ENCODE measurements at regions of chr11 and their contacts with region 1.

Region 1: GRCh38 chr11:7098235-7098832 is 9.5 kb downstream of the RBMXL2 start:
- DNase-seq: peak; percentile 46
- ATAC-seq: peak; percentile 83
- H3K4me3 ChIP-seq: no peak overlapping the region
- H3K27ac ChIP-seq: no peak overlapping the region
- H3K4me1 ChIP-seq: no peaks in the 10 kb centered on the region
- H3K27me3 ChIP-seq: no peaks in the 10 kb centered on the region; the same call in 1 of the 2 replicates
- CTCF ChIP-seq: peak; percentile 77
- POLR2A ChIP-seq: no peak
- RAD21 ChIP-seq: peak; percentile 85

Region 2: DNA sequence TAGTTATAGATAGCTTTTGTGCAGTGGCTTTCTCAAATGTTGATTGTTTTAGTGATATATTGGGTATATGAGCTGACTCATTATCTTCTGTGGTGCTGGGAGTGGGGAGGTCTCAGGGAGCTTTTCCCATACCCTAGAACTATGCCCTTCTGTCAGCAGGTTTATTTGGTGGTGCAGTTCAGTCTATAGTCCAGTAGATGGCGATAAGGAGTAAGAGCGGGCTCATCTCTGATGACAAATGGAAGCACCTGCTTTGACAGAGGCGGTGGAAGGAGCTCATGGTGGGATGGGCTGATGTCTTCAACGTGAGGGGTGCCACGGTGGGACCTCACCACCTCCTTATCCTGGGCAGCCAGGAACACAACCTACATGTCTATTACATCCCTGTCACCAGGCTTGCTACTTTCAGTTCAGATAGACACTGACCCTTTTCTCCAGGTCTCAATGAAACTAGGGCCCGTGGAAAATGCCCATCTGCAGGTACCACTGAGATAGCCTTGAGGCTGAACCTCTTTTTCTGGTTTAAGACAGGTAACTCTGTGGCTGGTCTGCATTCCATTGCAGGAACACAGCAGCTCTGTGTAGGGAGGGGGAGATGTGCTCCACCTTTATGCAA is 285.8 kb before region 1 on chr11:
- CTCF ChIA-PET with region 1: interaction called, 6 read pairs
- POLR2A ChIA-PET with region 1: no interaction called
- dilution Hi-C with region 1: no loop called
- in situ Hi-C with region 1: no loop called
- intact Hi-C with region 1: loop called (anchors 10 kb)
- DNase-seq: peak; percentile 34
- ATAC-seq: peak; percentile 96
- H3K4me3 ChIP-seq: no peak overlapping the region
- H3K27ac ChIP-seq: no peak overlapping the region
- H3K4me1 ChIP-seq: no peaks in the 10 kb centered on the region
- H3K27me3 ChIP-seq: no peaks in the 10 kb centered on the region; the same call in 1 of the 2 replicates
- CTCF ChIP-seq: peak; percentile 71
- POLR2A ChIP-seq: no peak
- RAD21 ChIP-seq: peak; percentile 71

Region 3: GRCh38 chr11:7278314-7278917 is 180.1 kb after region 1 on chr11:
- CTCF ChIA-PET with region 1: no interaction called
- POLR2A ChIA-PET with region 1: no interaction called
- dilution Hi-C with region 1: no loop called
- in situ Hi-C with region 1: no loop called
- intact Hi-C with region 1: loop called (anchors 2 kb)
- DNase-seq: peak; percentile 34
- ATAC-seq: peak; percentile 76
- H3K4me3 ChIP-seq: no peak overlapping the region
- H3K27ac ChIP-seq: no peak overlapping the region
- H3K4me1 ChIP-seq: no peaks in the 10 kb centered on the region
- H3K27me3 ChIP-seq: no peaks in the 10 kb centered on the region
- CTCF ChIP-seq: peak; percentile 56
- POLR2A ChIP-seq: no peak
- RAD21 ChIP-seq: peak; percentile 48

Region 4: DNA sequence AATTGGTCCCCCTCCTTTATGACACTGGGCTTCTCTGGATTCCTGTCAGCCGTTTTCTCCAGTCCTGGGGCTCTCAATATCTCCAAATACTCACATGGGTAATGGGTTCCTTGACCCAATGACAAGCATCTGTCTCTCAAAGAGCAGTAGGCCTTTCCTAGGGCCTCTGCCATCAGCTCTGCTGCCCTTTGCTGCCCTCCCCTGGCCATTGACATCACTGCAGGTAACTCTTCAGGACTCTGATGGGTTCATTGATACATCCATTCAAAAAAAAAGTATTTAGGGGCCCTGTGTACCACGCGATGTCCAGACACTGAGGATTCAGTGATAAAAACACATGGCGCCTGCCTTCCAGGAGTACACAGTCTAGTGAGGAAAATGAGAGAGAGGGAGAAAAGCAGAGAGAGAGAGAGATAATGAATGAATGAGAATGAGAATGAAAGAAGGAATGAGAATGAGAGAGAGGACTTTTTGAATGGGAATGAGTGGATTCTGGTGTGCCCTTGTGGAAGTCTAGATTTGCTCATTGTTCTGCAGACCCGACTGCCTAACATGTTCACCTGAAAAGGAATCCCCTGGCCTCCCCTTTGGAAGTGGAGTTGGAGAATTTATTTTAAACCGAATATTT is 344.4 kb after region 1 on chr11:
- CTCF ChIA-PET with region 1: interaction called, 5 read pairs
- POLR2A ChIA-PET with region 1: no interaction called
- dilution Hi-C with region 1: no loop called
- in situ Hi-C with region 1: loop called (anchors 5 kb)
- intact Hi-C with region 1: loop called (anchors 1 kb)
- DNase-seq: peak; percentile 31
- ATAC-seq: peak; percentile 96
- H3K4me3 ChIP-seq: no peak overlapping the region
- H3K27ac ChIP-seq: no peak overlapping the region
- H3K4me1 ChIP-seq: no peaks in the 10 kb centered on the region
- H3K27me3 ChIP-seq: no peaks in the 10 kb centered on the region; the same call in 1 of the 2 replicates
- CTCF ChIP-seq: peak; percentile 71
- POLR2A ChIP-seq: no peak
- RAD21 ChIP-seq: peak; percentile 69

Region 5: DNA sequence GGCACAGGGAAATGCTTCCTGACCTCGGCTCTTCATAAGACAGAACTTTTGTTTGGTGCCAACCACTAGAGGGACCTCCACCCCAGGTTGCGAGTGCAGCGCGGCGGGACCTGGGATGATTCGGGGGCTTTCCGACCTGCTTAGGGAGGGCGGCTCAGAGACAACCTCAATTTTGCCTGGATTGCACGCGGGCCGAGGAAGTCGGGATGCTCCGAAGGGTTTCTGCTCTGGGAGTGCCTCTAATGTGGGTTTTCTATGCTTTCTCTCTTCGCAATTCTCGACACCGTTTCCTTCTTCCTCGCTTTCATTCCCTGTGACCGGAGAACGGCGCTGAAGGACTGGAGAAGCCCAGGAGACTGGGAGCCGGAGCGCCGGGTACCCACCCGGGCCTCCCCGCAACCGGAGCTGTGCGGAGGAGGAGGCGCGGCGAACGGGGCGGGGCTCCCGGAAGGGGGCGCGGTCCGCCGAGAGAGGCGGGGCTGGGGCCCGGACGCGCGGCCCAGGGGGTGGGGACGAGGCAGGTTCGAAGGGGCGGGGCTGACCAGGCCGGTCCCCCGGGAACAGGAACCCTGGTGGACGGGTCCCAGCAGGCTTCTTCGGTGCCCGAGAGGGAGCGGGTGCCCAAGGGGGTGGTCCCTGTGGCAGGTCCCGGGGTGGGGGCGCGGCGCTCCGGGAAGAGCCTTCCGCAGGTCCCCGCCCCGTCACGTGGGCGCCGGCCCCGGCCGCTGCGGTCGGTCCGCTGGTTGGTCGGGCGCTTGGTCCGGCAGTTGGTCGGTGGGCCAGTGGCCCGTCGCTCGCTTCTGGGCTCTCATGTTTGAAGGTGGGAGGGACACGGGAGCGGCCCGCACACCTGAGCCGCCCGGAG is 415.1 kb after region 1 on chr11 and contains the start of gene PPFIBP2:
- CTCF ChIA-PET with region 1: no interaction called
- POLR2A ChIA-PET with region 1: no interaction called
- dilution Hi-C with region 1: no loop called
- in situ Hi-C with region 1: no loop called
- intact Hi-C with region 1: loop called (anchors 5 kb)
- DNase-seq: peak; percentile 47
- ATAC-seq: peak; percentile 98
- H3K4me3 ChIP-seq: peak within 1 kb of the TSS; percentile 58
- H3K27ac ChIP-seq: no peak within 1 kb of the TSS
- H3K4me1 ChIP-seq: peaks cover 2% of the 10 kb centered on the region; the same call in 1 of the 2 replicates
- H3K27me3 ChIP-seq: peaks cover 27% of the 10 kb centered on the region
- CTCF ChIP-seq: peak; percentile 60
- POLR2A ChIP-seq: no peak
- RAD21 ChIP-seq: peak; percentile 52
- total RNA-seq, gene PPFIBP2: 9.4 and 11.8 TPM in 2 replicates

Region 6: GRCh38 chr11:7688238-7688826 is 590.0 kb after region 1 on chr11:
- CTCF ChIA-PET with region 1: no interaction called
- POLR2A ChIA-PET with region 1: no interaction called
- dilution Hi-C with region 1: no loop called
- in situ Hi-C with region 1: loop called (anchors 25 kb)
- intact Hi-C with region 1: loop called (anchors 1 kb)
- DNase-seq: peak; percentile 31
- ATAC-seq: peak; percentile 82
- H3K4me3 ChIP-seq: no peak overlapping the region
- H3K27ac ChIP-seq: no peak overlapping the region
- H3K4me1 ChIP-seq: 0 out of 2 replicates have a peak, but pooled peaks cover 2% of the 10 kb centered on the region
- H3K27me3 ChIP-seq: peaks cover 17% of the 10 kb centered on the region
- CTCF ChIP-seq: peak; percentile 77
- POLR2A ChIP-seq: no peak
- RAD21 ChIP-seq: peak; percentile 60